Astrocyte of the cerebellum (primary cell): ENCODE measurements at regions of chr17 and their contacts with region 1.

Region 1: GRCh38 chr17:55750750-55751657 is at the start of gene PCTP:
- DNase-seq: peak; percentile 45
- H3K4me3 ChIP-seq: peak within 1 kb of the TSS; percentile 78
- CTCF ChIP-seq: peak; percentile 63

Region 2: DNA sequence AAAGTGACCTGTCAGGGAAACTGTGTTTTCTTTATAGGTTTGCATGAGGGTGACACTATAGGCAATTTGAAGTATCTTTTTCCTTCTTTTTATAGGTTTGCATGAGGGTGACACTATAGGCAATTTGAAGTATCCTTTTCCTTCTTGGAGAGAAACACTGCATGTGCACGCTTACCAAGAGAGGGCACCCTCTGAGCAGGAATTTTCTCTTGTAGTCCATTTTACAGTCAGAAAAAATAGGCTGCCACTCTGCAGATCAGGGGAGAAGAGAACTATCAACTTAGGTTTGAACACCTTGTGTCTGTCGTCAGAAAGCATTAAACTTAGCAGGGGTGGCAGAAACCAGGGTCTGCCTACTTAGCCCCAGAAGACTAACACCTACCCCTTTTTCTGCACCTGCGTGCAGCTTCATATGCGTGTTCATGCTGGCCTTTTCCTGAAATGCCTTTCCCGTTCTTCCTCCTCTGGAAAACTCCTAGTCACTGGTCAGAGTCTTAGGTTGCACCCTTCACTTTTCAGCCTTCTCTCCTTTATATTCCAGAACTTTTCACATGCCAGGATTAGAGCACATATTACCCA is 223.4 kb before region 1 on chr17:
- in situ Hi-C with region 1: loop called (anchors 25 kb)
- DNase-seq: peak; percentile 38
- H3K4me3 ChIP-seq: no peak overlapping the region
- CTCF ChIP-seq: peak; percentile 74